ENCODE measurements at regions of chr11 and their contacts with region 1.

Region 1: DNA sequence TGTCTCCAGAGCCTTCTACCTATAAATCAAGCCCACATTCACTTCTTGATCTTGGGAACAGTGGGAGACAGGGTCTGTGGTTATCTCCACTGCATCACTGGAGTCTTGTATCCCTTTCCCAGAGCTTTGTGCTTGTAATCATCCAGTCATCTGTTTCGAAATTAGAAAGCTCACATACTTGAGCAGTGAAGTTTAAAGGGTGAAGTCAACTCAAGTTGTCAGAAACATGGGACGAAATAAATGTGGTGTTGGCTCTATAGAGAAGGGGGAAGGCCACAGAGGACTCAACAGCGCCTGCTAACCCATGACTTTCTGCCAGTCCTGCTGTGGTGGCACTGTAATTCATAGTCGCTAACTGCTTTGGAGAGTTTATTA is 197.5 kb downstream of the DBX1 start:
- DNase-seq: no peak
- H3K4me3 ChIP-seq: no peak overlapping the region
- H3K27ac ChIP-seq: no peak overlapping the region
- H3K4me1 ChIP-seq: peaks cover 3% of the 10 kb centered on the region
- H3K27me3 ChIP-seq: no peaks in the 10 kb centered on the region
- CTCF ChIP-seq: no peak
- POLR2A ChIP-seq: no peak

Region 2: GRCh38 chr11:19432370-19433061 is 530.3 kb before region 1 on chr11:
- intact Hi-C with region 1: loop called (anchors 10 kb)
- DNase-seq: no peak
- H3K4me3 ChIP-seq: no peak overlapping the region
- H3K27ac ChIP-seq: no peak overlapping the region
- H3K4me1 ChIP-seq: no peaks in the 10 kb centered on the region
- H3K27me3 ChIP-seq: no peaks in the 10 kb centered on the region
- CTCF ChIP-seq: no peak
- POLR2A ChIP-seq: no peak

Region 3: DNA sequence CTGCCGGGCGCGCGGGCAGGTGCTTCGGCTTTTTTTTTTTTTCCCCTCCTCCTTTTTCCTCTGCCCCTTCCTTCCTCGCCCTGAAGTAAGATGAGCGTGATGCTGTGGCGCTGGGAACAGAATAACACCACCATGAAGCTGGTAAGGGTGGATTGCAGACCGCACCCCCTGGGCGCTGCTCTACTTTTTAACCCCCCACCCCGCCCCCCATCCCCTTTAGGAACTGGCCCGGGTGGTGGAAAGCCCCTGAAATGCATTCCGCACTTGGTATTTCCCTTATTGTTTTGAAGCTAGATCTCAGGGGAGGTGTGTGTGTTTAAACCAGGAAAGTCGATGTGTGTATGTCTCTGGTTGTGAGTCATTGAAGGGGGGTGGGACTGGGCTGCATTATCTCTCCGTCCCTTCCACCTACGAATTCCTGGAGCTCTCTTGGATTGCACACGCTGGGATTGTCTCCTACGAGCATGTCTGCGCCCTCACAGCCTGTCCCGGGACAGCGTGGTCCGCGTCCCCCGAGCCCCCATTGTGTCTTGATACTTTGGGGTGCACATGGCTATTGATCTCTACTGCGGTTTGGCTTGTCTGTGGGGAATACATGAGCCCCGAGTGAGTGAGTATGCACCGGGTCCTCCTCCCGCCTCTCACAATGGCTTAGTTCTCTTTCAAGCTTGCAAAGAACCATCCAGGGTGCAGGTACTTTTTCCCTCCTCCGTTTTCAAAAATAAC is 185.2 kb before region 1 on chr11:
- intact Hi-C with region 1: no loop called
- DNase-seq: no peak
- H3K4me3 ChIP-seq: peak overlapping the region; percentile 37 to 38
- H3K27ac ChIP-seq: no peak overlapping the region
- H3K4me1 ChIP-seq: no peaks in the 10 kb centered on the region
- H3K27me3 ChIP-seq: no peaks in the 10 kb centered on the region
- CTCF ChIP-seq: no peak
- POLR2A ChIP-seq: no peak

Region 4: GRCh38 chr11:19829109-19829824 is 133.5 kb before region 1 on chr11:
- intact Hi-C with region 1: no loop called
- DNase-seq: no peak
- H3K4me3 ChIP-seq: no peak overlapping the region
- H3K27ac ChIP-seq: no peak overlapping the region
- H3K4me1 ChIP-seq: no peaks in the 10 kb centered on the region
- H3K27me3 ChIP-seq: no peaks in the 10 kb centered on the region
- CTCF ChIP-seq: no peak
- POLR2A ChIP-seq: no peak